ENCODE measurements at regions of chr11 and their contacts with region 1.

Region 1: DNA sequence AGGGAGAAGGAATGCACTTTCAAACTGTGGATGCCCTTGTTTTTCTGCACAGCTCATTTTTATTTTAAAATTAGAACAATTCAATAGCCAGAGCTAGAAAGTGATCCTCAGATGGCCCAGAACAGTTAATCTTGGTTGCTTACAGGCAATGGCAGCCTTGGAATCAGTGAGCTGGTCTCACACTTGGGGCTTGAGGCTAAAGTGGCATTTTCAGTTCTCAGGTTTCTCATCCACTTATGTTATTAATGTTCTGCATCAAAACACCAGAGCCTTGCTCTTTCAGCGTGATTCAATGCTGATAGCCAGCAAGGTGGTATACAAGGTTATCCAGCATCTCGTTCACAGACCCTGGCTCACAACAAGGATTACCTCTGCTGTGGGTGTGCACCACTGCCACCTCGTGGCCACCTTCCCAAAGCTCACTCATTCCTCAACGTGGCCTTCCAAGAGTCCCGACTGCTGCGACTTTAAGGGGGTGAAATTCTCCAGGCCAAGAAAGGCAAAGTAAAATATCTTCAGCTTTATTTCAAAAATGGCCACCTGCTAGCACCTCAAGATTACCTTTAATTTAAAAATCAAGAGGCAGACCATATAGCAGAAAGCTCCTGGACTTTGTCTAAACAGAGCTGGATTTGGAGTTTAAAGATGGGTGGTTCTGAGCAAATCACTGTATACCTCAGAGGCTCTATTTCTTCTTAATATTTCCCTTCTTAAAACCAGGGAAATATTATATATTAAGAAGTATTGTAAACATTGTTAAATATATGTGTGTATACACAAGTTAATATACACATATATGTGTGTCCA is 34.2 kb upstream of the FSHB start:
- DNase-seq: peak; percentile 53 to 84 (median 80)
- ATAC-seq: peak; percentile 81 to 84
- H3K4me3 ChIP-seq: no peak overlapping the region
- H3K27ac ChIP-seq: no peak overlapping the region
- H3K4me1 ChIP-seq: no peaks in the 10 kb centered on the region
- H3K27me3 ChIP-seq: no peaks in the 10 kb centered on the region

Region 2: DNA sequence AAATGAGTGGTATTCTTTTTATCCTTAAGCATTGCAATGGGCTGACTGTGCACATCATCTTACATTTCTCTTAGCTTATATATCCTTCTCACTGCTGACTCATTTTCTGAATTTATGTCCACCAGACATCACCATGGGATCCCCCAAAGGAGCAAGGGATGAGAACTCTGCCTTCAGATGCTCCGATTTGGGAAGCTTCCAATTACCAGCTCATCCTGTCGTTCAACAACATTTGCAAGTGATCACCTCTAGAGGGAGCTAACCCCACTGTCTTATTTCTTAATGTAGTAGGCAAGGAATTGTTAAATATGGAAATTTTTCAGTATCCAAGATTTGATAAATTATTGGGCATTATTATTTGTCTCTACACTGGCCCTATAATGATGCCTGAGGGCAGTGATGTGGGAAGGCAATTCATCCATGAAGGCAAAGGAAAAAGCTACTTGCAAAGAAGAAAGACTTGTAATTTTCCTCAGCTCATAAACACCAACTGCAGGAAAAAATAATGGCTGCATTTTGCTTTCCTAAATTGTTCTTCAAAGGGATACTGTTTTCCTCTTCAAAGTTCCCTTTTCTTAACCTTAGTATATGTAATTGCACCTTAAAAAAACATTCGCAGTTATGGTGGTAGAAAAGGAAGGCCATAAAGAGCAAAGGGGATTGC is 68.2 kb before region 1 on chr11:
- intact Hi-C with region 1: loop called in 2 of 4 experiments (anchors 5 kb)
- DNase-seq: no peak
- ATAC-seq: no peak
- H3K4me3 ChIP-seq: no peak overlapping the region
- H3K27ac ChIP-seq: no peak overlapping the region
- H3K4me1 ChIP-seq: no peaks in the 10 kb centered on the region
- H3K27me3 ChIP-seq: no peaks in the 10 kb centered on the region